ENCODE measurements at regions of chr14 and their contacts with region 1.

Region 1: DNA sequence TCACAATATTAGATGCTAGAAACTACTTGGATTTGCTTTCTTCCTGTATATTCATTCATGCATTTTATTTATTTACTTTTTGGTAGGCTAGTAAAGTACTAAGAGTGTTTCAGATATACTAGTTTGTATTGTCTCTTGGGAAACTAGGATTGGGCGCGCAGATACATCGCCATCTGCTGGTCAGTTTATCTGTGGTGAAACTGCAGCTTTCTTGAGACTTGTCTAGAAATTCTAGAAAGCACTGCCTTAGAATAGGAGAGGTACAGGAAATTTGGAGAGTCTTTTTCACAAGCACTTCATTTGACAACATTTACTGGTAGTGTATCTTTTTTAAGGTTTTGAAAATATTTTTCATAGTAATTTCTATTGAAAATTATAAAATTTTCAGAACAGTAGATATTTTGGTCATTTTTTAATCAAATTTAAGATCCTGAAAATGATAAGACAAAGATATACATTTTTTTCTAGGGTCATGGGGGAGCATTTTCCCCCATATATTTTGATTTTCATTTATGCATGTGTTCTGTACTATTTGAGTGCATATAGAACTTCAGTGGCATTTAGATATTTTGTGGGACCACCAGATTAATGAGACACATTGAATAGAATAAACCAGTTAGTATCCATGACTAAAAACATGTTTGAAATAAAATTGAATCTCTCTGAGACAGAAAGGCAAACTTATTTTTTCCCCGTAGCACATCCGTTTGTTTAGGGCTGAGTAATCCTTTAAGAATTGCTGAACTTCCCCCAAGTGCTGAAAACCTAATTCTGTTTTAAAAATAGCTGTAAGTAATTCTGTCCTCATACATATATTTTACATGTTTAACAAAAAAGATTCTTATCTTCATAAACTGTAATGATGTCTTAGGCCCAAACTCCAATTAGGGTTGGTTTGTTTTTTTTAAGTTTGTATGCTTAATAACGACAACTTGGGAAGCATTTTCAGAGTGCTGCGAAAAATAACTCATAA is 44.5 kb downstream of the SLC38A6 start:
- DNase-seq: peak; percentile 72
- ATAC-seq: no peak
- H3K4me3 ChIP-seq: no peak overlapping the region
- H3K4me3 Mint-ChIP-seq: no peak overlapping the region
- H3K27ac ChIP-seq: no peak overlapping the region
- H3K27ac Mint-ChIP-seq: no peak overlapping the region
- H3K4me1 ChIP-seq: no peaks in the 10 kb centered on the region
- H3K4me1 Mint-ChIP-seq: no peaks in the 10 kb centered on the region
- H3K27me3 ChIP-seq: no peaks in the 10 kb centered on the region
- H3K27me3 Mint-ChIP-seq: no peaks in the 10 kb centered on the region
- CTCF ChIP-seq: peak; percentile 98

Region 2: GRCh38 chr14:60349663-60350365 is 675.7 kb before region 1 on chr14:
- CTCF ChIA-PET with region 1: interaction called, 3 read pairs
- POLR2A ChIA-PET with region 1: no interaction called
- intact Hi-C with region 1: loop called (anchors 1 kb)
- DNase-seq: peak; percentile 55
- ATAC-seq: peak; percentile 36
- H3K4me3 ChIP-seq: no peak overlapping the region
- H3K4me3 Mint-ChIP-seq: no peak overlapping the region
- H3K27ac ChIP-seq: no peak overlapping the region
- H3K27ac Mint-ChIP-seq: no peak overlapping the region
- H3K4me1 ChIP-seq: no peaks in the 10 kb centered on the region
- H3K4me1 Mint-ChIP-seq: no peaks in the 10 kb centered on the region
- H3K27me3 ChIP-seq: peaks cover 0 to 13% (median 2%) of the 10 kb centered on the region in 4 experiments
- H3K27me3 Mint-ChIP-seq: peaks cover 9% of the 10 kb centered on the region
- CTCF ChIP-seq: peak; percentile 75

Region 3: GRCh38 chr14:60622917-60623257 is 402.6 kb before region 1 on chr14:
- CTCF ChIA-PET with region 1: interaction called, 126 read pairs
- POLR2A ChIA-PET with region 1: no interaction called
- intact Hi-C with region 1: loop called (anchors 1 kb)
- DNase-seq: no peak
- ATAC-seq: no peak
- H3K4me3 ChIP-seq: no peak overlapping the region
- H3K4me3 Mint-ChIP-seq: no peak overlapping the region
- H3K27ac ChIP-seq: no peak overlapping the region
- H3K27ac Mint-ChIP-seq: no peak overlapping the region
- H3K4me1 ChIP-seq: no peaks in the 10 kb centered on the region
- H3K4me1 Mint-ChIP-seq: peaks cover 5% of the 10 kb centered on the region
- H3K27me3 ChIP-seq: peaks cover 0 to 4% (median 2%) of the 10 kb centered on the region in 4 experiments
- H3K27me3 Mint-ChIP-seq: peaks cover 28% of the 10 kb centered on the region
- CTCF ChIP-seq: no peak

Region 4: DNA sequence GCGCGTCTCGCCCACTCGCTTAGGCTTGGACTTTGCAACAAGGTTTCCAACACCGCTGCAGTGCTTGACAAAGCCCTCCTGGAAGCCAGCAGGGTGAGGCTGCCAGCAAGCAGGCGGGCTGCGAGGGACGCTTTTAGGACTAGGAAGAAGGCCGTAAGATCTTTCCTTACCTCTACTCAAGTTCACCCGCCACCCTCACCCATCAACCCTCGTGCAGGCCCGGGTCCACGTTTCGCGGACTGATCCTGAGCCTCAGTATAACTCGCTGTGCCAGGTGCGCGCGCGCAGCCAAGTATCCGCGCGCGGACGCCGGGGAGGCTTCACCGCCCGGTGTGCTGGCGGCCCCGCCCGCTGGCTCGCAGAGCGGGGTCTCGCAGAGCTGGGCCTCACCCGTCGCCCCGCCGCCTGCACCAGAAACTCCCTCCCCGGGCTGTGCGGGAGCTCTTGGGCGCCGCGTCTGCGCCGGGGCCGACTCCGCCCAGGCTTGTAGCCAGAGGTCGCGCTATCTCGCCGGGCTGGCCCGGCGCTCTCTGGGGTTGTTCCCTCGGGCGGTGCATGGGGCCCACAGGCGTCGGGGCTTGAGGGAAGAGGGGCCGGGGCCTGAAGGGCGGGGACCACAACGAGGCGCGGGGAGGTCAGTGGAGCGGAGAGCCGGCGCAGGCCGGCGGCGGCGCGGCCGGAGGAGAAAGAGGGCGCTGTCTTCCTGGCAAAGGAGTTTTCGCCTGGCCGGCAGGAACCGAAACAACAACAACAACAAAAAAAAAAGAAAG is 368.7 kb before region 1 on chr14:
- CTCF ChIA-PET with region 1: interaction called, 10 read pairs
- POLR2A ChIA-PET with region 1: no interaction called
- intact Hi-C with region 1: loop called (anchors 1 kb)
- DNase-seq: peak; percentile 82
- ATAC-seq: peak; percentile 87
- H3K4me3 ChIP-seq: peak overlapping the region; percentile 50 to 71 (median 64)
- H3K4me3 Mint-ChIP-seq: peak overlapping the region; percentile 84
- H3K27ac ChIP-seq: no peak overlapping the region
- H3K27ac Mint-ChIP-seq: peak overlapping the region; percentile 80
- H3K4me1 ChIP-seq: peaks cover 37 to 39% of the 10 kb centered on the region in 2 donors
- H3K4me1 Mint-ChIP-seq: peaks cover 36% of the 10 kb centered on the region
- H3K27me3 ChIP-seq: peaks cover 3 to 85% (median 70%) of the 10 kb centered on the region in 4 experiments
- H3K27me3 Mint-ChIP-seq: peaks cover 73% of the 10 kb centered on the region
- CTCF ChIP-seq: peak; percentile 30

Region 5: DNA sequence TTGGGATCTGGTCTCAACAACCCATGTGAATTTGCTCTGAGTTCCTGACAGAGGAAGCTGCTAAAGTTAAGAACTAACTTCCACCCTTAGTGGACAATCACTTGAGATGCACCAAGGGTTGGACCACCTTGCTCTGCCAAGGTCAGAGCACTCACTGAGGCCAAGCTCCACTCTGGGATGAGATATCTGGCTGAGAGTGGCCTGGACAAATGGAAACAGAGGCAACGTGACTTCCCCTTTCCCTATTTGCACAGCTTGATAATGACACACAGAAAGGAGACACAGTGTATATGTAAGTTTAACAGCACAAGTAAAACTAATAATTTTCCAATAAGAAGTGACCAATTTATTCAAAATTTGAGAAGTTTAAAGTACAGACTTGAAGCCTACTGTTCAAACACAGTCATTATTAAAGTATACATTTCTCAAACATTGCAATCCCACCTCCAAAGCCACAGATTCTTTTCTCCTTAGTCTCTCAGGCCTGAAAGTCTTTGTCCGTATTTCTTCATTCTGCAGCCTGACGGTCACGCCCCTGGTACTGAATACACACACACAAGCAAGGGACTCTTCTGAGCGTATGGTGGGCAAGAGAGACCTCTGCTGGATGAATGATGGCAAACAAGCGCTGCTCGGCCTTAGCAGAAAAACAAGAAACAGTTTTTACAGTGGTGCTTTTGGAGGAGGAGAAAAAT is 227.0 kb after region 1 on chr14:
- CTCF ChIA-PET with region 1: interaction called, 11 read pairs
- POLR2A ChIA-PET with region 1: no interaction called
- intact Hi-C with region 1: loop called (anchors 1 kb)
- DNase-seq: peak; percentile 74
- ATAC-seq: peak; percentile 88
- H3K4me3 ChIP-seq: no peak overlapping the region
- H3K4me3 Mint-ChIP-seq: no peak overlapping the region
- H3K27ac ChIP-seq: no peak overlapping the region
- H3K27ac Mint-ChIP-seq: no peak overlapping the region
- H3K4me1 ChIP-seq: peaks cover 3 to 7% of the 10 kb centered on the region in 2 donors
- H3K4me1 Mint-ChIP-seq: peaks cover 10% of the 10 kb centered on the region
- H3K27me3 ChIP-seq: peaks cover 0 to 5% (median 1%) of the 10 kb centered on the region in 4 experiments
- H3K27me3 Mint-ChIP-seq: peaks cover 22% of the 10 kb centered on the region
- CTCF ChIP-seq: peak; percentile 86

Measured in B cell (primary cell).